Heart left ventricle (tissue), 16 donors: ENCODE measurements at regions of chr12 and their contacts with region 1.

Region 1: DNA sequence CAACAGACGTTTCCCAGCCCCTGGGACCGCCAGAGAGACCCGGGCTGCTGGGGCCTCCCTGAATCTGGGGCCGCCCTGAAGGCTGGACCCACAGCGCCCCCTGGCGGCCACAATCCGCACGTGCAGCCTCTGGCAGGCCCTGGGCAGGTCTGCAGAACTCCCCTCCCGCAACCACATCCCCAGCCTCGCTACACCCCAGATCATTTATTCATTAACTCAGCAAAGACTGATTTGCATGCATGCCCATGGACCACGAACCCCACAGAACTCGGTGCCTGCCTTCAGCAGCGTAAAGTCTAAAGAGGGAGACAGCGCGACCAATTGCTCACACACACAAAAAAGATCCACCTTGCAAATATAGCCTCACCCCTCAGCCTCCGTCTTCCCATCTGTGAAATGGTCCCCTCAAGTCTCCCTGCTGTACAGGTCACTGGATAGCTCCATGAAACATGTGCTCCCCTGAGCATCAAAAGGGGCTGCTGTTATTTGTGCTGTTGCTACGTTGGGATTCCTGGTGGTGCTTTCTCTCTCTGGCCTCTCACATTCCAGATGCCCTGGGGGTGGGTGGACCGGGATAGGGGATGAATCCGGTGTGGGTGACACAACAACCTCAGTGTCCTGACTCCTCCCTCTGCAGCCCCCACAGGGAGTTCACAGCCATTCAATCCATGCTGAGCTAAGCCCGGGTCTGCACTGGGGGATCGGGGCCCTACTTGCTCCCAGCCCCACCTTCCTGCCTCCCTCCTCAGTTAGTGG is 96.4 kb downstream of the SCARB1 start:
- DNase-seq: peak; percentile 73 to 90 (median 81)
- ATAC-seq: peak; percentile 71 to 82 (median 76)
- H3K4me3 ChIP-seq: no peak overlapping the region
- H3K27ac ChIP-seq: peak overlapping the region in 8 of 12 donors; percentile 60 to 86 (median 74)
- H3K4me1 ChIP-seq: peaks cover 0 to 59% (median 30%) of the 10 kb centered on the region in 12 donors
- H3K27me3 ChIP-seq: no peaks in the 10 kb centered on the region
- CTCF ChIP-seq: peak; percentile 98 to 100 (median 100)
- POLR2A ChIP-seq: no peak

Region 2: GRCh38 chr12:123905319-123905925 is 861.8 kb before region 1 on chr12:
- intact Hi-C with region 1: loop called in 2 of 10 experiments (anchors 10 kb)
- DNase-seq: peak in 2 of 5 donors; percentile 28 to 30
- ATAC-seq: peak in 1 of 4 donors; percentile 44
- H3K4me3 ChIP-seq: no peak overlapping the region
- H3K27ac ChIP-seq: no peak overlapping the region
- H3K4me1 ChIP-seq: peaks cover 0 to 8% (median 0%) of the 10 kb centered on the region in 12 donors
- H3K27me3 ChIP-seq: peaks cover 0 to 6% (median 0%) of the 10 kb centered on the region in 9 donors
- CTCF ChIP-seq: peak; percentile 63 to 83 (median 78)
- POLR2A ChIP-seq: no peak

Region 3: DNA sequence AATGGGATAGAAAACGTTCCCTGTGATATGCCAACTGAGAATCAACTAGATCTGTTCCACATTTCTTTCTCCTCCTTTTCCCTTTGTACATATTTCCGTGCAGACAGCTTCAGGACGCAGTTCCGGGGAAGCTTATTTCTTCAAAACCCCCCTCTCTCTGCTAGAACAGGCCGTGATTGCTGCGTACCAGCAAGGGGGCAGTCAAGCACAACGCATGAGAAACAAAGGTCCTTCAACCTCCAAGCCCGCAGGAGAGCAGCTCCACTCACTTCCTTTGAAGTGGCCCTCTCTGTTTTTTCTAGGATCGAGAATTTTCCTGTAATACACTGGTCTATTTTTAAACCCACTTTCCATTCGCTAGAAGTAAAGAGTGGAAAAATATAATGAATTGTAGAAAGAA is 713.4 kb before region 1 on chr12:
- intact Hi-C with region 1: loop called (anchors 2 to 5 kb)
- DNase-seq: peak in 4 of 5 donors; percentile 50 to 62 (median 58)
- ATAC-seq: peak; percentile 79 to 94 (median 88)
- H3K4me3 ChIP-seq: no peak overlapping the region
- H3K27ac ChIP-seq: no peak overlapping the region
- H3K4me1 ChIP-seq: peaks cover 0 to 17% (median 5%) of the 10 kb centered on the region in 12 donors
- H3K27me3 ChIP-seq: no peaks in the 10 kb centered on the region
- CTCF ChIP-seq: peak; percentile 39 to 82 (median 72)
- POLR2A ChIP-seq: no peak

Region 4: DNA sequence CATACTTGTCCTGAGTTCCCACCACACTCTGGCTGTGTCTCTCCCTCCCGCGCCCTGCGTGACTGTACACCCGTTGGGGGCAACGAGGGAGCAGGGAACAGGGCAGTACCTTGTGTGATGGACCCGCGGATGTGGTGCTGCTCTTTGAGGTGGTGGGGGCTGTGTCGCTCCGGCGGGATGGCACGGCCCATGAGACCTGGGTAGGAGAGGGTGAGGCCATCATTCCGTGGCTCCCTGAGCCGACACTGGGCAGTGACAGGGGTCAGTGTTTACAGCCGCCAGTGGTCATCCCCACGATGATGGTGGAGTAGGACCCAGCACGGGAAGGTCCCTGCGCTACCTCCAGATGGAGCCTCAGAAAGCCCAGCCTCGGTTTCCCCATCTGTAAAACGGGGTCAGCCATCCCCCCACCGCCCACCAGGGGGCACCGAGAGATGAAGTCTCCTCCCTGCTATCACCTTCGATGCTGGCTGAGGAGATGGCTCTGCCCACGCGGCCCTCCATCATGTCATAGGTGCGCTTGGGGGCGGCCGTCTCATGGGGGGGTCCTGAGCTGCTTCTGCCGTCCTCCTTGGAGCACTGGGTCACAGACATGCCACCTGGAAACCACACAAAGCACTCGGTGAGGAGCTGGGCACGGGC is 419.4 kb before region 1 on chr12:
- intact Hi-C with region 1: loop called in 4 of 10 experiments (anchors 10 kb)
- DNase-seq: no peak
- ATAC-seq: peak in 1 of 4 donors; percentile 4
- H3K4me3 ChIP-seq: no peak overlapping the region
- H3K27ac ChIP-seq: no peak overlapping the region
- H3K4me1 ChIP-seq: peaks cover 0 to 9% (median 6%) of the 10 kb centered on the region in 12 donors
- H3K27me3 ChIP-seq: no peaks in the 10 kb centered on the region
- CTCF ChIP-seq: peak; percentile 30 to 55 (median 48)
- POLR2A ChIP-seq: no peak

Region 5: DNA sequence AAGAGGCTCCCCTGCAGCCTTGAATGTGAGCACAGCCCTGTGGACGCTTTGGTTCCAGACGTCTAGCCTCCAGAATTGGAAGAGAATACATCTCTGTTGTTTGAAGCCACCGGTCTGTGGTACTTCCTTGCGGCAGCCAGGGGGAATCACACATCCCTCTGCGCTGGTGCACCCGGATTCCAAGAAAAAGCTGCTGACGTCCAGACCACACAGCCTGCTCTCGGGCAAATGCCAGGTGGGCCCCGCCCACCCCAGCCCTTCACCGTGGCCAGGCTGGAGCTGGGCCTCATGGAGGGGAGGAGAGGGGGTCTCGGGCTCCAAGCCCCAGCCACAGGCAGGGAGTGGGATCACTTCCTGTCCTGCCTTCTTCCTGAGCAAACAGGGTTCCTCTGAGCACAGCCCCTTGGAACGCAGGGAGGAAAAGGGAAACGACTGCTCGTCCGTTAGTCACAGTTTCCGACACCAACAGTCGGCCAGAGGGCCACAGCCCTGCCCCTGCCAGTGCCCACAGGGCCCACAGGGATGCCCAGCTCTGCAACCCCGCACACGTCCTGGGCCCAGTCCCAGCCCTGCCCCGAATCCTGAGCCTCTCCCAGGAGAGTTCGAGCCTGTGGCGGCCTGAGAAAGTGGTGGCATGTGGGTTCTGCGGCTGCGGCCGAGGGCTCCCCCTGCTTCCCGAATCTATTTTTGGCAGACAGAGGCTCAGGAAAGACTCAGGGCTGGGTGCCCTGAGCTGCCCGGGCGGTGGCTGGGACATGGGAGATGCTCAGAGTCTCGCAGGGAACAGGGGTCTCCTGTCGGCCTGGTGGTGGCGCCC is 387.1 kb before region 1 on chr12:
- intact Hi-C with region 1: loop called in 2 of 10 experiments (anchors 5 kb)
- DNase-seq: peak; percentile 71 to 85 (median 78)
- ATAC-seq: peak; percentile 36 to 71 (median 54)
- H3K4me3 ChIP-seq: peak overlapping the region in 3 of 12 donors; percentile 3 to 25 (median 23)
- H3K27ac ChIP-seq: peak overlapping the region; percentile 74 to 96 (median 86)
- H3K4me1 ChIP-seq: peaks cover 21 to 70% (median 51%) of the 10 kb centered on the region in 12 donors
- H3K27me3 ChIP-seq: no peaks in the 10 kb centered on the region
- CTCF ChIP-seq: peak; percentile 26 to 80 (median 54)
- POLR2A ChIP-seq: no peak

Region 6: DNA sequence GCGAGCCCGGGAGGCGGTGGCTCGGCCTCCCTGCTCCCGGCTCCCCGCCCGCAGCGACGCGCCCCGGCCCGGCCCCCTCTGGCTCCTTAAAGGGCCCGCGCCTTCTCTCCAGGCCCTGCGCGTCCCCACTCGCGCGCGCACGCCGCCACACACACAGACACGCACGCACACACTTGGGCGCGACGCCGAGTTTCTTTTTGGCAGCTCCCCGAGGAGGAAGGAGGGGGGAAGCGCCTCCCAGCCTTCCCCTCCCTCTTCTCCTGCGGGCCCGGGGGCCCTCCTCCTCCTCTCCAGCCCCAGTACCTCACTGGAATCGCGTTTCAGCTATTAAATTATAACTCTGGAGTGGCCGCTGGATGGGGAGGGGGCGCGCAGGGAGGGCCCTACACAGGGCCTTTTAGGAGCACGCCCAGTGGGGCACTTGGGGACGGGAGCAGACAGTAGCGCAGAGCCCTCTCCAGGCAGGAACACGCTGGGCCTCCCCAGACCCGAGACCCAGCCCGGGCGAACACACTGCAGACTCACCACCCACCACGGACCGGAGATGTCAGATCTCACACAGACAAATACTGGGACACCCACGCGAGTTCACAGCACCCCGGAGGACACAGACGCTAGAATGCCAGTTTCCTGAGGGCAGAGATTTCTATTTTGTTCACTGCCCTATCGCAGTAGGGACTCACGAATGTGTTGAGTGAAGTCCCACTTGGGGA is 199.4 kb before region 1 on chr12:
- intact Hi-C with region 1: loop called (anchors 1 to 5 kb)
- DNase-seq: peak; percentile 96 to 98 (median 96)
- ATAC-seq: peak; percentile 79 to 90 (median 86)
- H3K4me3 ChIP-seq: peak overlapping the region in 11 of 12 donors; percentile 24 to 99 (median 47)
- H3K27ac ChIP-seq: peak overlapping the region; percentile 66 to 99 (median 92)
- H3K4me1 ChIP-seq: peaks cover 0 to 53% (median 43%) of the 10 kb centered on the region in 12 donors
- H3K27me3 ChIP-seq: no peaks in the 10 kb centered on the region
- CTCF ChIP-seq: peak in 1 of 12 donors; percentile 16
- POLR2A ChIP-seq: no peak

Region 7: DNA sequence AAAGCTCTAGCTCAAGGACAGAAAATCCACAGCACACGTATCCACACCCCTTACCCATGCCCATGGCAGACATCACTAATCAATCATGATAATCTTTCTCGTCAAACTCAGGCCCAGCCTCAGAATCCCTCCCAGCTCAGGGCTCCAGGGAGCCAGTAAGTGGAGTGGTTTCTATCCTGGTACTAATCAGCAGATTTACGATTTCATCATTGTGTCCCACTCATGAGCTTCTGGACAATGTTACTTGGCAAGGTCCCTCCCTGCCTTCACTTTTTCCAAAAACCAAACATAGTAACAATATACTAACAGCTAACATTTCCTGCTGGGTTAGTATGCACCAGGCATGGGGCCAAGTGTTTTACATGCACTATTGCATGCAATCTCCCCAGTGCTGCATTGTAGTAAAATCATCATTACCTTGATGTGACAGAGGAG is 154.1 kb before region 1 on chr12:
- intact Hi-C with region 1: no loop called
- DNase-seq: no peak
- ATAC-seq: no peak
- H3K4me3 ChIP-seq: no peak overlapping the region
- H3K27ac ChIP-seq: no peak overlapping the region
- H3K4me1 ChIP-seq: peaks cover 0 to 37% (median 14%) of the 10 kb centered on the region in 12 donors
- H3K27me3 ChIP-seq: no peaks in the 10 kb centered on the region
- CTCF ChIP-seq: no peak
- POLR2A ChIP-seq: no peak

Region 8: GRCh38 chr12:124680863-124681778 is 86.1 kb before region 1 on chr12:
- intact Hi-C with region 1: loop called in 1 of 10 experiments (anchors 5 kb)
- DNase-seq: peak in 3 of 5 donors; percentile 62 to 86 (median 76)
- ATAC-seq: peak; percentile 27 to 82 (median 60)
- H3K4me3 ChIP-seq: no peak overlapping the region
- H3K27ac ChIP-seq: peak overlapping the region; percentile 11 to 90 (median 80)
- H3K4me1 ChIP-seq: peaks cover 13 to 75% (median 53%) of the 10 kb centered on the region in 12 donors
- H3K27me3 ChIP-seq: no peaks in the 10 kb centered on the region
- CTCF ChIP-seq: peak in 11 of 12 donors; percentile 11 to 48 (median 34)
- POLR2A ChIP-seq: no peak

Region 9: DNA sequence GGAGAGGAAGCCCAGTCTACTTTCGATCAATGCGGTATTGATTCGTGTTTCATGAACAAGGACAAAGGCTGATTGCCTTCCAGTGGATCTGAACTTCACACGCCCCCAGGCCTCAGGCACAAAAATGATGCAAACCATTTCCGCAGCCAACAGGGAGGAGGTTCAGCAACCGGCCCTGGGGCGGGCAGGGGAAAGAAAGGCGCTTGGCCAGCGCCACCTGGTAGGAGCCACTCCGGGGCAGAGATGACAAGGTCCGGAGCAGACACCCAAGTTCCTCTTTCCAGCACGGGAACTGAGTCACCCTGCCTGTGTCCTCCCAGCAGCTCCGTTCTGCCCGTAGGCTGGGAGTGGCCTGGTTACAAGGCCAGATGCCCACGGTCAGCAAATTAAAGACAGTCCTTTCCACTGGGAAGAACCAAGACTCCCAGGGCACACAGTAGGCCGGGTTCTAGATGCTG is 40.0 kb before region 1 on chr12:
- intact Hi-C with region 1: no loop called
- DNase-seq: peak; percentile 73 to 89 (median 85)
- ATAC-seq: peak; percentile 68 to 92 (median 86)
- H3K4me3 ChIP-seq: no peak overlapping the region
- H3K27ac ChIP-seq: peak overlapping the region in 11 of 12 donors; percentile 31 to 93 (median 56)
- H3K4me1 ChIP-seq: peaks cover 0 to 62% (median 14%) of the 10 kb centered on the region in 12 donors
- H3K27me3 ChIP-seq: no peaks in the 10 kb centered on the region
- CTCF ChIP-seq: peak in 1 of 12 donors; percentile 8
- POLR2A ChIP-seq: no peak

Region 10: DNA sequence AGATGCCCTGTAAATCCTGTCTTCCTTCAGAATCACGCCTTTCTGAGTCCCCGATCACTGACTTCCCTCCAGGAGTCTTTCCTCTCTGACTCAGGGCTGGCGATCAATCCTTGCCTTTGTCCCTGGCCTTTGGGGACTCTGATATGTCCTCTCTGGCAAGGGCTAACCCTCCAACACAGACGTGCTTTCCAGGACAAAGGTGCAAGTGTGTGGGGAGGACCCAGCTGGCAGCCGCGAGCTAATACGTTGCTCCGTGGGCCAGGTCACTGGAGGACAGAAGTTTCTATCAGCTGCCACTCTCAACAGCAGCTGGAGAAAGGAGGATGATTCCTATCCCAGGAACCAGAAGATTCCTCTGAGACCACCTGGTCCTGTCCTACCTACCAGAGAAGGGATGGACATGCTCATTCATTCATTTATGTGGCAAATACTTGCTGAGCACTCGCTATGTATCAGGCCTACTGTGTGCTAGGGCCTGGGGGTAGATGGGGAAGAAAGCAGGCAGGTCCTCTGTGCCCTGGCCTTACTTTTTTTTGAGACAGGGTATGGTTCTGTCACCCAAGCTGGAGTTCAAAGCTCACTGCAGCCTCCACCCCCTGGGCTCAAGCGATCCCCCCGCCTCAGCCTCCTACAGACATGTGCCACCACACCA is 105.0 kb after region 1 on chr12:
- intact Hi-C with region 1: no loop called
- DNase-seq: no peak
- ATAC-seq: peak in 1 of 4 donors; percentile 37
- H3K4me3 ChIP-seq: no peak overlapping the region
- H3K27ac ChIP-seq: no peak overlapping the region
- H3K4me1 ChIP-seq: peaks cover 0 to 24% (median 0%) of the 10 kb centered on the region in 12 donors
- H3K27me3 ChIP-seq: no peaks in the 10 kb centered on the region
- CTCF ChIP-seq: no peak
- POLR2A ChIP-seq: no peak

Region 11: GRCh38 chr12:124940549-124941527 is 173.6 kb after region 1 on chr12:
- intact Hi-C with region 1: no loop called
- DNase-seq: peak; percentile 90 to 94 (median 94)
- ATAC-seq: peak; percentile 60 to 86 (median 77)
- H3K4me3 ChIP-seq: peak overlapping the region in 11 of 12 donors; percentile 2 to 69 (median 57)
- H3K27ac ChIP-seq: peak overlapping the region; percentile 62 to 96 (median 88)
- H3K4me1 ChIP-seq: peaks cover 0 to 39% (median 25%) of the 10 kb centered on the region in 12 donors
- H3K27me3 ChIP-seq: no peaks in the 10 kb centered on the region
- CTCF ChIP-seq: peak; percentile 83 to 97 (median 92)
- POLR2A ChIP-seq: peak in 1 of 2 donors; percentile 37